HEK293 (cell line): ENCODE measurements at regions of chr3 and their contacts with region 1.

Region 1: GRCh38 chr3:79361748-79362378 is 405.9 kb downstream of the ROBO1 start:
- H3K4me3 ChIP-seq: no peak overlapping the region
- H3K27ac ChIP-seq: no peak overlapping the region
- H3K4me1 ChIP-seq: no peaks in the 10 kb centered on the region
- CTCF ChIP-seq: no peak

Region 2: DNA sequence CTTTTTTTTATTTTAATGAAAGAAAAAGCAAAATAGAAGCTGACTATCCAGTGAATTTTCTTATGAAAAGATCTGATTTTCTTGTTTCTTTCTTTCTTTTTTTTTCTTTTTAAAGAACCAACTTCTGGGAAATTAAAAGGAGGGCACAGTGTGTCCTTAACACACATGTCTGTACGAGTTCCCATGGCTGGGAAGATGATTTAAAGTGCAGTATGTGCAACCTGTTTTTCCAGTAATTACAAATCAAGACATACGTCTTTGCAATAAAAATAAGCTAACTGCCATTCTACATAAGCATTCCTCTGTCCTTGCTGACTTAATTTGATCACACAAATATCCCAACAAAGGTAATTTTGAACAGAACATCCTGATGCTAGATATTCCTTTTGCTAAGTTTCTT is 10.2 kb before region 1 on chr3:
- CTCF ChIA-PET with region 1: interaction called, 14 read pairs
- POLR2A ChIA-PET with region 1: no interaction called
- H3K4me3 ChIP-seq: no peak overlapping the region
- H3K27ac ChIP-seq: no peak overlapping the region
- H3K4me1 ChIP-seq: no peaks in the 10 kb centered on the region
- CTCF ChIP-seq: no peak

Region 3: GRCh38 chr3:79385211-79385610 is 23.3 kb after region 1 on chr3:
- CTCF ChIA-PET with region 1: no interaction called
- POLR2A ChIA-PET with region 1: no interaction called
- H3K4me3 ChIP-seq: no peak overlapping the region
- H3K27ac ChIP-seq: no peak overlapping the region
- H3K4me1 ChIP-seq: no peaks in the 10 kb centered on the region
- CTCF ChIP-seq: no peak